Gastrocnemius medialis (tissue), 4 donors: ENCODE measurements at regions of chr1 and their contacts with region 1.

Region 1: GRCh38 chr1:6554031-6554906 is at the start of gene NOL9:
- DNase-seq: peak; percentile 84 to 91
- ATAC-seq: peak; percentile 94
- H3K4me3 ChIP-seq: peak within 1 kb of the TSS; percentile 75 to 100 (median 96)
- H3K27ac ChIP-seq: peak within 1 kb of the TSS; percentile 69 to 95 (median 79)
- H3K4me1 ChIP-seq: peaks cover 21 to 24% of the 10 kb centered on the region in 2 donors
- H3K27me3 ChIP-seq: no peaks in the 10 kb centered on the region
- CTCF ChIP-seq: peak; percentile 95 to 99 (median 97)
- POLR2A ChIP-seq: peak; percentile 39 to 40
- total RNA-seq, gene NOL9: 13.6 to 33.0 (median 21.9) TPM

Region 2: DNA sequence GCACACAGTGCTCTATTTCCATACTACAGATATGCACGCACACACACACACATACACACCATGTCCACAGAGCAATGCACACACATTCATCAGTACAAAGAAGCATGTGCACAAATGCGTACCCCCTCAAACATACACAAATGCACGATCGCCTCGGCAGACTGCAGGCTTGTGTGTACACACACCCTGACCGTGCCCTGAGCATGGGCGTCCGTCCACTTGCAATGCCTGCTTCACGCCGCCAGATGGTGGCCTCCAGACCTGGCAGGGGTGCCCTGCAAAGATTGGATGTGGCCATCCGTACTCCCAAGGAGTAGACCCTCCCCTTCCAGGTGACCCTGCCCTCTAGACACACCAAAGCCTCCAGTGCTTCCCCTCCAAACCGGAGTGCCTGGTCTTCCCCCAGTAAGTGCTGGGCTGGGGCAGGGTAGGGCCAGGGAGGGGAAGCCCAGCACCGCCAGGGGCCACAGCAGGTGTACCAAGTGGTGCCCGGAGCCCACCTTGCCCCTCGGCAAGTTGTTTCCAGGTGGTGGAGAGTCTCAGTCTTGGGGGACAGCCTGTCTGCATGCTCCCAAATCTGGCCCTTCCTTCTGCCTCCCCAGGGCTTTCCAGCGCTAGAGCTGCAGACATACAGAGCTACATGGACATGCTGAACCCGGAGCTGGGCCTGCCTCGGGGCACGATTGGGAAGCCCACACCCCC is 109.1 kb before region 1 on chr1:
- in situ Hi-C with region 1: no loop called
- intact Hi-C with region 1: no loop called
- DNase-seq: no peak
- ATAC-seq: no peak
- H3K4me3 ChIP-seq: no peak overlapping the region
- H3K27ac ChIP-seq: no peak overlapping the region
- H3K4me1 ChIP-seq: peaks cover 0 to 5% of the 10 kb centered on the region in 2 donors
- H3K27me3 ChIP-seq: peaks cover 45 to 58% (median 51%) of the 10 kb centered on the region in 3 donors
- CTCF ChIP-seq: peak in 2 of 5 experiments; percentile 13 to 21
- POLR2A ChIP-seq: no peak

Region 3: GRCh38 chr1:6579374-6580118 is 25.3 kb after region 1 on chr1 and contains the start of gene ZBTB48:
- in situ Hi-C with region 1: no loop called
- intact Hi-C with region 1: loop called (anchors 1 kb)
- DNase-seq: peak; percentile 98 to 99
- ATAC-seq: peak; percentile 88 to 89
- H3K4me3 ChIP-seq: peak within 1 kb of the TSS; percentile 80 to 94 (median 86)
- H3K27ac ChIP-seq: peak within 1 kb of the TSS; percentile 91 to 98 (median 96)
- H3K4me1 ChIP-seq: peaks cover 17 to 26% of the 10 kb centered on the region in 2 donors
- H3K27me3 ChIP-seq: no peaks in the 10 kb centered on the region
- CTCF ChIP-seq: no peak
- POLR2A ChIP-seq: peak; percentile 95 to 97
- total RNA-seq, gene ZBTB48: 9.3 to 14.5 (median 11.3) TPM

Region 4: GRCh38 chr1:6634371-6635052 is 80.2 kb after region 1 on chr1:
- in situ Hi-C with region 1: loop called in 1 of 4 experiments (anchors 5 kb)
- intact Hi-C with region 1: loop called (anchors 5 kb)
- DNase-seq: peak; percentile 60 to 88
- ATAC-seq: peak; percentile 70 to 89
- H3K4me3 ChIP-seq: no peak overlapping the region
- H3K27ac ChIP-seq: peak overlapping the region in 2 of 4 donors; percentile 12 to 62
- H3K4me1 ChIP-seq: peaks cover 0 to 10% of the 10 kb centered on the region in 2 donors
- H3K27me3 ChIP-seq: no peaks in the 10 kb centered on the region
- CTCF ChIP-seq: peak; percentile 57 to 77 (median 68)
- POLR2A ChIP-seq: no peak

Region 5: GRCh38 chr1:6691507-6691906 is 137.2 kb after region 1 on chr1:
- in situ Hi-C with region 1: loop called in 1 of 4 experiments (anchors 10 kb)
- intact Hi-C with region 1: no loop called
- DNase-seq: no peak
- ATAC-seq: no peak
- H3K4me3 ChIP-seq: no peak overlapping the region
- H3K27ac ChIP-seq: peak overlapping the region in 1 of 4 donors; percentile 54
- H3K4me1 ChIP-seq: peaks cover 18 to 38% of the 10 kb centered on the region in 2 donors
- H3K27me3 ChIP-seq: no peaks in the 10 kb centered on the region
- CTCF ChIP-seq: no peak
- POLR2A ChIP-seq: no peak

Region 6: DNA sequence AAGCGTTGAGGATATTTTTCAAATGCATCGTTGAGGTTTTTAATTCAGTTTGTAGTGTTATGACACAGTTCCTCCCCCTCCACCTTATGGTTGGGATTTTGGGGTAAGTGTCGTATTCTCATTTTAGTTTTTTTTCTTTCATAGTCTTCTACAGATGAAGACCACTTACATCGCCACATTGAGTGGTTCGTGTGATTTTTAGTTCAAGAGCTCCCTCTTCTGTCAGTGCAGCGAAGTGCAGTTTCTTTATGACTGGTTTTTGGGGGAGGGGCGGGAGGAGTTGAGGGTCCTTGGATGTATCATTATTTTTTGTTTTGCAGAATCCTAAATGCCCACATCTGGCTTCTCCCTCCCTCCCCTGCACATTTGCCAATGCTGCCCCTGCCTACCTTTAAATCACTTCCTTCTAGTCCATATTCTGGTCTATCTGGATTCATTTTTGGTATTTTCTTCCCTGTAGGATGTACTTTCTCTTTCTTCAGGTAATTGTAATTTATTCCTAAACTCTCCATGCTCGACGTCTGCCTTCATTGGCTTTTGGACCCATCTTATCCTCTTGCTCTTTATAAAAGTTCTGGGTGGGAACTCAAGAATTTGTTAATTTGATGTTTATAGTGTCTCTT is 664.1 kb after region 1 on chr1:
- in situ Hi-C with region 1: no loop called
- intact Hi-C with region 1: loop called (anchors 5 kb)
- DNase-seq: no peak
- ATAC-seq: peak in 1 of 2 donors; percentile 45
- H3K4me3 ChIP-seq: no peak overlapping the region
- H3K27ac ChIP-seq: no peak overlapping the region
- H3K4me1 ChIP-seq: no peaks in the 10 kb centered on the region
- H3K27me3 ChIP-seq: no peaks in the 10 kb centered on the region
- CTCF ChIP-seq: peak; percentile 62 to 78 (median 71)
- POLR2A ChIP-seq: no peak